Activated T-helper 1 cell treated with anti-CD3 and anti-CD28 coated beads, Interleukin-12 subunit alpha, Interleukin-12 subunit beta, Interleukin-2, Interleukin-4 antibody, amounts not matched to agents 30 ng/mL and 10 ng/mL and 1 ng/mL, durations not matched to agents 14 hours and 24 hours and 36 hours (primary cell): ENCODE measurements at regions of chr2 and their contacts with region 1.

Region 1: GRCh38 chr2:177392373-177393202 is at the start of gene AGPS:
- DNase-seq: peak; percentile 80
- H3K4me3 Mint-ChIP-seq: peak within 1 kb of the TSS; percentile 90
- H3K27ac Mint-ChIP-seq: peak within 1 kb of the TSS; percentile 92
- H3K4me1 Mint-ChIP-seq: peaks cover 58% of the 10 kb centered on the region
- H3K27me3 Mint-ChIP-seq: no peaks in the 10 kb centered on the region
- total RNA-seq, gene AGPS: 70.1 and 71.8 TPM in 2 replicates

Region 2: DNA sequence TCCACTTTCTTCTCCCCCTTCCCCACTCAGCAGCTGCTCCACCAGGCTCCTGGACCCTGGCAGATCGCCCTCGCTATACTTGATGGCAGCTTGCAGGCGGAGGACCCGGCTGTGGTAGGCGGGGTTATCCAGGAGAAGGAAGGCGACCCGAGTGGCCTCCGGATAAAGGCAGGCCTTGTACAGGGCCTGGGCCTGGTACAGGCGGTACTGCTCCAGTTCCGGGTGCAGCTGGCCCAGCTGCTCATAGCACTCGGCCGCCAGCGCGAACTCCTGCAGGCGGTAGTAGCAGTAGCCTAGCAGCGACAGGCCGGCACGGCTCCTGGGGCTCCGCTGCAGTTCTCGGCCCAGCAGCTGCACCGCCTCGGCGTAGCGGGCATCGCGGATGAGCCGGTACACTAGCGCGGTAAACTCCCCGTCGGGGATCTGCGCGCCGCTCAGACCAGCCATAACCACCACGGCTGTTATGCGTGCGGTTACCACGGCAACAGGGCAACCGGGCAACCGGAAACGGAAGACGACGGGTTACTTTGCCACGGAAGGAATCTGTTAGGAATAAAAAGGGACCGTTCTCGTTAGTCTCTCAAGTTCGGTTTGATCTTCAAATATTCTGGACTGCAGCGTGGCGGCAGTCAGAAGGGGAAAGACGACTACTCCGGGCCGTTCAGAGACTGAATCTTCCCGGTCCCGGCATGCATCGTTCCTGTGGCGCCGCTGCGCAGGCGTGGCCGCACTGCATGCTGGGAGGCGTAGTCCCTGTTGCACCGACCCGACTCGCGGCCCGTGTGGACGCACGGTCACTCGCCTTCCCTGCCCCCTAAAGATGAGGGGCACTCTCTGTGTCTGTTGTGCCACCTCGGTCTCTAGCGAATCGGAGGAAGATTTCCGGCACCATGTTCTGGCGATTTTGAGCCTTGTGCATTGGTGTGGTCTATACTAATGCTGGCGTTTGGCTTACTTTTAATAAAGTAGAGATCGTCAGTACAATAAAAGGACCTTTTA is 226.0 kb after region 1 on chr2:
- intact Hi-C with region 1: loop called (anchors 1 kb)
- DNase-seq: peak; percentile 91
- H3K4me3 Mint-ChIP-seq: peak overlapping the region; percentile 94
- H3K27ac Mint-ChIP-seq: peak overlapping the region; percentile 99
- H3K4me1 Mint-ChIP-seq: peaks cover 13% of the 10 kb centered on the region
- H3K27me3 Mint-ChIP-seq: peaks cover 4% of the 10 kb centered on the region

Region 3: GRCh38 chr2:177799531-177799930 is 406.9 kb after region 1 on chr2:
- intact Hi-C with region 1: no loop called
- DNase-seq: no peak
- H3K4me3 Mint-ChIP-seq: no peak overlapping the region
- H3K27ac Mint-ChIP-seq: no peak overlapping the region
- H3K4me1 Mint-ChIP-seq: no peaks in the 10 kb centered on the region
- H3K27me3 Mint-ChIP-seq: peaks cover 12% of the 10 kb centered on the region